ENCODE measurements at regions of chr2 and their contacts with region 1.

Region 1: GRCh38 chr2:84905181-84906107 is at the start of gene TMSB10:
- DNase-seq: no peak
- ATAC-seq: peak; percentile 81
- H3K4me3 ChIP-seq: peak within 1 kb of the TSS; percentile 99
- H3K27ac ChIP-seq: peak within 1 kb of the TSS; percentile 62
- H3K4me1 ChIP-seq: peaks cover 24% of the 10 kb centered on the region
- H3K27me3 ChIP-seq: no peaks in the 10 kb centered on the region
- CTCF ChIP-seq: peak in 2 of 3 experiments; percentile 25 to 33; a peak in 2 of 6 replicates
- EP300 ChIP-seq: no peak; a peak in 1 of 4 replicates
- POLR2A ChIP-seq: peak; percentile 99
- RAD21 ChIP-seq: no peak
- polyA plus RNA-seq, gene TMSB10: 2,817 to 3,116 TPM

Region 2: GRCh38 chr2:84888401-84889276 is 16.8 kb before region 1 on chr2:
- CTCF ChIA-PET with region 1: interaction called, 18 read pairs
- POLR2A ChIA-PET with region 1: interaction called, 22 read pairs
- RAD21 ChIA-PET with region 1: interaction called, 44 read pairs
- SMC1A ChIA-PET with region 1: interaction called, 30 read pairs
- in situ Hi-C with region 1: no loop called
- intact Hi-C with region 1: no loop called
- DNase-seq: peak; percentile 70
- ATAC-seq: peak; percentile 99
- H3K4me3 ChIP-seq: peak overlapping the region; percentile 54
- H3K27ac ChIP-seq: peak overlapping the region; percentile 85
- H3K4me1 ChIP-seq: peaks cover 13% of the 10 kb centered on the region
- H3K27me3 ChIP-seq: no peaks in the 10 kb centered on the region
- CTCF ChIP-seq: no peak
- EP300 ChIP-seq: peak in 1 of 2 experiments; percentile 61; a peak in 1 of 4 replicates
- POLR2A ChIP-seq: 0 out of 2 replicates have a peak, but pooled peaks have one; percentile 37
- RAD21 ChIP-seq: no peak

Region 3: DNA sequence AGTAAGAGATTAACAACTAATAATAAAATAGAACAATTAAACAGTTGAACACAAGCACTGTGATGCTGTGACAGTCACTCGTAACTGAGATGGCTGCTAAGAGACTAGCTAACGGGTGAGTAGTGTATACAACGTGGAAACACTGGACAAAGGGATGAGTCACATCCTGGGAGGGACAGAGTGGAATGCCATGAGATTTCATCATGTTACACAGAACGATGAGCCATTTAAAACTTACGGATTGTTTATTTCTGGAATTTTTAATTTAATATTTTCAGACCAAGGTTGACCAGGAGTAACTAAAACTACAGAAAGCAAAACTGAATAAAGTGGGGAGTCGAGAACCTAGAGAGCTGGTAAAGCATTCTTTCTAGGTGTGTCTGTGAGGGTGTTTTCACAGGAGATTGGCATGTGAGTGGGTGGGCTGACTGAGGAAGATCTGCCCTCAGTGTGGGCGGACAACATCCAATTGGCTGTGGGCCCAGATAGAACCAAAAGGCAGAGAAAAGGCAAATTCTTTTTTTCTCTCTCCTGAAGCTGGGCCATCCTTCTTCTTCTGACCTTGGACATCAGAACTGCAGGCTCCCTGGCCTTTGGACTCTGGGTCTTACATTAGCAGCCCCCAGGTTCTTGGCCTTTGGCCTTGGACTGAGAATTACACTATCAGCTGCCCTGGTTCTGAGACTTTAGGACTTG is 14.6 kb after region 1 on chr2:
- CTCF ChIA-PET with region 1: interaction called, 37 read pairs
- POLR2A ChIA-PET with region 1: interaction called, 71 read pairs
- RAD21 ChIA-PET with region 1: interaction called, 67 read pairs
- SMC1A ChIA-PET with region 1: interaction called, 52 read pairs
- in situ Hi-C with region 1: no loop called
- intact Hi-C with region 1: loop called (anchors 2 kb)
- DNase-seq: no peak
- ATAC-seq: peak; percentile 64
- H3K4me3 ChIP-seq: peak overlapping the region; percentile 4
- H3K27ac ChIP-seq: peak overlapping the region; percentile 74
- H3K4me1 ChIP-seq: peaks cover 30% of the 10 kb centered on the region
- H3K27me3 ChIP-seq: no peaks in the 10 kb centered on the region
- CTCF ChIP-seq: no peak
- EP300 ChIP-seq: no peak
- POLR2A ChIP-seq: no peak
- RAD21 ChIP-seq: no peak

Region 4: GRCh38 chr2:84939426-84940087 is 34.1 kb after region 1 on chr2:
- CTCF ChIA-PET with region 1: interaction called, 10 read pairs
- POLR2A ChIA-PET with region 1: interaction called, 28 read pairs
- RAD21 ChIA-PET with region 1: interaction called, 9 read pairs
- SMC1A ChIA-PET with region 1: interaction called, 4 read pairs
- in situ Hi-C with region 1: no loop called
- intact Hi-C with region 1: no loop called
- DNase-seq: peak; percentile 99
- ATAC-seq: peak; percentile 76
- H3K4me3 ChIP-seq: peak overlapping the region; percentile 57
- H3K27ac ChIP-seq: peak overlapping the region; percentile 100
- H3K4me1 ChIP-seq: peaks cover 50% of the 10 kb centered on the region
- H3K27me3 ChIP-seq: no peaks in the 10 kb centered on the region
- CTCF ChIP-seq: 0 out of 6 replicates have a peak, but pooled peaks of 1 of the 3 experiments have one; percentile 5
- EP300 ChIP-seq: peak; percentile 51 to 54; a peak in 3 of 4 replicates
- POLR2A ChIP-seq: peak; percentile 75
- RAD21 ChIP-seq: peak; percentile 13; the same call in 1 of the 2 replicates

Region 5: DNA sequence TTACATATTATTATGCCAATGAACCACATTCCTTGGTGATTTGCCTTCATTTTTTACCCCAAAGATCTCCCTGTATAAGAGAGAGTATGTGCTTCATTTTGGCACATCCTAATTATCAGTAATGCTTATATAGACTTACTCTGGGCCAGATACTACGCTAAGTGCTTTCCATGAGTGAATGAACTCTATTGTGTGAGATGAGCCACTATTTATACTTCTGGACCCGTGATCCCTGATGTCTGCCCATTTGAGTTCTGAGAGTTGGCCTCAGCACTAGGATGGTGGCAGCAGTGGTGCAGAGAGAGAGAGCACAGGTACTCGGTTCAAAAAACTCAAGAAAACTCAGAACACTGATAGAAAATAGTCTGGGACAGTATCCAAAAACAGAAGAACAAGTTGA is 48.1 kb after region 1 on chr2:
- CTCF ChIA-PET with region 1: no interaction called
- POLR2A ChIA-PET with region 1: no interaction called
- RAD21 ChIA-PET with region 1: no interaction called
- SMC1A ChIA-PET with region 1: no interaction called
- in situ Hi-C with region 1: no loop called
- intact Hi-C with region 1: no loop called
- DNase-seq: no peak
- ATAC-seq: no peak
- H3K4me3 ChIP-seq: no peak overlapping the region
- H3K27ac ChIP-seq: no peak overlapping the region
- H3K4me1 ChIP-seq: no peaks in the 10 kb centered on the region
- H3K27me3 ChIP-seq: no peaks in the 10 kb centered on the region
- CTCF ChIP-seq: no peak
- EP300 ChIP-seq: no peak
- POLR2A ChIP-seq: no peak
- RAD21 ChIP-seq: no peak

Measured in GM12878 (cell line).